CD4-positive, alpha-beta memory T cell (primary cell): ENCODE measurements at regions of chr15 and their contacts with region 1.

Region 1: GRCh38 chr15:44711356-44712107 is at the start of gene B2M:
- DNase-seq: peak; percentile 96 to 98 (median 97)
- H3K4me3 ChIP-seq: peak within 1 kb of the TSS; percentile 94
- H3K4me3 Mint-ChIP-seq: peak within 1 kb of the TSS; percentile 90 to 100 (median 99)
- H3K27ac ChIP-seq: peak within 1 kb of the TSS; percentile 99
- H3K27ac Mint-ChIP-seq: peak within 1 kb of the TSS; percentile 100
- H3K4me1 ChIP-seq: peaks cover 38% of the 10 kb centered on the region
- H3K4me1 Mint-ChIP-seq: peaks cover 33 to 75% (median 49%) of the 10 kb centered on the region in 4 donors
- H3K27me3 ChIP-seq: no peaks in the 10 kb centered on the region
- H3K27me3 Mint-ChIP-seq: no peaks in the 10 kb centered on the region
- total RNA-seq, gene B2M: 7,421 to 7,929 TPM

Region 2: DNA sequence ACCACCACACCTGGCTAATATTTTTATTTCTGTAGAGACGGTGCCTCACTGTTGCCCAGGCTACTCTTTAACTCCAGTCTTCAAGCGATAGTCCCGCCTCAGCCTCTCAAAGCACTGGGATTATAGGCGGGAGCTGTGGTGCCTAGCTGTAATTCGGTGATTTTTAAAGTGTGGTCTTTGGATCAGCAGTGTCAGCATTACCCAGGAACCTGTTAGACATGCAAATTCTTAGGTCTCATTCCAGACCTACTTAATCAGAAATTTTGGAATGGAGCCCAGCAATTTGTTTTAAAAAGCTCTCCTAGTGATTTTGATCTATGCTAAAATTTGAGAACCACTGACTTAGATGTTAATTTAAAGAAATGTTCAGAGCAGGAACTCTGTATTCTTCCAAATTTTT is 371.1 kb before region 1 on chr15:
- CTCF ChIA-PET with region 1: no interaction called
- POLR2A ChIA-PET with region 1: no interaction called
- intact Hi-C with region 1: no loop called
- DNase-seq: no peak
- H3K4me3 ChIP-seq: no peak overlapping the region
- H3K4me3 Mint-ChIP-seq: no peak overlapping the region
- H3K27ac ChIP-seq: no peak overlapping the region
- H3K27ac Mint-ChIP-seq: peak overlapping the region in 1 of 7 donors; percentile 36
- H3K4me1 ChIP-seq: no peaks in the 10 kb centered on the region
- H3K4me1 Mint-ChIP-seq: no peaks in the 10 kb centered on the region
- H3K27me3 ChIP-seq: no peaks in the 10 kb centered on the region
- H3K27me3 Mint-ChIP-seq: no peaks in the 10 kb centered on the region

Region 3: DNA sequence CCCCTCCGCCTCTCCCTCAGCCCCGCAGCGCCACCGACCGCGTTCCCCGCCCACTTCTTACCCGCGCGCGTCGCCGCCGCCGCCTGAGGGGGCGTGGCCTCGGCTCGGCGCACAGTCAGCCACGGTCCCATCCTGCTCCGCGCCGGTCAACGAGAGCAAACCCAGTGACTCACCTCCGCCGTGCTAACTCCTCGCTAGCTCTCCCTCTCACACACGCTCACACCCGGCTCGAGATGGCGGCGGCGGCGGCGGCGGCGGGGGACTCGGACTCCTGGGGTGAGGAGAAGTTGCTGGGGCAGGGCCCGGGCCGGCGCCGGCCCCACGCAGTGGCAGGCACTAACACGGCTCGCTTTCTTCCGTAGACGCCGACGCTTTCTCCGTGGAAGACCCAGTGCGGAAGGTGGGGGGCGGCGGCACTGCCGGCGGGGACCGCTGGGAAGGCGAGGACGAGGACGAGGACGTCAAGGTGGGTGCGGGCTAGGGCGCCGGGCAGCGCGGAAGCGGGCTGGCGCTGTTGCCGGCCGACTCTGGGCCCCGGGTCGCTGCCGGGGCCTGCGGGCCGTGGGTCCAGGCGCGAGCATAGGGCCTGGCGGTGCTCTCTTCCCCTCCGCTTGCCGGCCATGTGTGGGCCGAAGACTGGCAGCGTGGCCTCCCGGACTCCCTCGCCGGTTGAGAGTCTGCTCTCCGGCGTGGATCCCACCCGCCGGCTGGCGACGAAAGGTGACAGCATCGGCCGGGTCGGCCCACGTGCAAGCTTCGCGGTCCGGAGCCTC is 174.4 kb before region 1 on chr15 and contains the start of gene EIF3J:
- CTCF ChIA-PET with region 1: no interaction called
- POLR2A ChIA-PET with region 1: interaction called, 14 read pairs
- intact Hi-C with region 1: no loop called
- DNase-seq: peak; percentile 94 to 96 (median 96)
- H3K4me3 ChIP-seq: peak within 1 kb of the TSS; percentile 71 to 90
- H3K4me3 Mint-ChIP-seq: peak within 1 kb of the TSS; percentile 83 to 96 (median 92)
- H3K27ac ChIP-seq: peak within 1 kb of the TSS; percentile 91
- H3K27ac Mint-ChIP-seq: peak within 1 kb of the TSS; percentile 88 to 97 (median 96)
- H3K4me1 ChIP-seq: peaks cover 48% of the 10 kb centered on the region
- H3K4me1 Mint-ChIP-seq: peaks cover 36 to 68% (median 48%) of the 10 kb centered on the region in 4 donors
- H3K27me3 ChIP-seq: no peaks in the 10 kb centered on the region
- H3K27me3 Mint-ChIP-seq: no peaks in the 10 kb centered on the region
- total RNA-seq, gene EIF3J: 65.0 to 76.8 TPM

Region 4: DNA sequence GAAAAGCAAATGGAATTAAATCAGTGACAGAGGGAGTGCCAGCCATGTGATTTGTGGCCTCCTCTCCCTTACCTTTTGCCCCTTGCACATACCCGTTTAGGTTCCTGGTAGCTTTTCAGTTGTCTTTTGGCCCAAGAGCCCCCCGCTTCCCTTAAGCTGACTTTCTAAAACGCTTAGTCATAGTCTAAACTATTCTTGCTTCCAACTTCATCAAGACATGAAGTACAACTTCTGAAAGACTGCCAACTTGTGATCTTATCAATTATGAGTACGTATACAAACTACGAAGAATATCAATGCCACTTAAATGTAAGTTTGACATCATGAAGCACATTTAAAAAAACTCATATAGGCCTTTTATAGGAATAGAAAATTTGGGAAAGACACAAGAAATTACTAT is 112.6 kb before region 1 on chr15:
- CTCF ChIA-PET with region 1: interaction called, 3 read pairs
- POLR2A ChIA-PET with region 1: interaction called, 11 read pairs
- intact Hi-C with region 1: no loop called
- DNase-seq: no peak
- H3K4me3 ChIP-seq: no peak overlapping the region
- H3K4me3 Mint-ChIP-seq: no peak overlapping the region
- H3K27ac ChIP-seq: peak overlapping the region; percentile 8
- H3K27ac Mint-ChIP-seq: peak overlapping the region; percentile 2 to 93 (median 81)
- H3K4me1 ChIP-seq: peaks cover 20% of the 10 kb centered on the region
- H3K4me1 Mint-ChIP-seq: peaks cover 15 to 36% (median 20%) of the 10 kb centered on the region in 4 donors
- H3K27me3 ChIP-seq: no peaks in the 10 kb centered on the region
- H3K27me3 Mint-ChIP-seq: no peaks in the 10 kb centered on the region

Region 5: GRCh38 chr15:44670491-44670890 is 41.0 kb before region 1 on chr15:
- CTCF ChIA-PET with region 1: interaction called, 821 read pairs
- POLR2A ChIA-PET with region 1: interaction called, 5,737 read pairs
- intact Hi-C with region 1: no loop called
- DNase-seq: no peak
- H3K4me3 ChIP-seq: no peak overlapping the region
- H3K4me3 Mint-ChIP-seq: peak overlapping the region in 7 of 8 donors; percentile 15 to 80 (median 71)
- H3K27ac ChIP-seq: peak overlapping the region; percentile 40
- H3K27ac Mint-ChIP-seq: peak overlapping the region; percentile 89 to 96 (median 96)
- H3K4me1 ChIP-seq: peaks cover 98% of the 10 kb centered on the region
- H3K4me1 Mint-ChIP-seq: peaks cover 67 to 96% (median 89%) of the 10 kb centered on the region in 4 donors
- H3K27me3 ChIP-seq: no peaks in the 10 kb centered on the region
- H3K27me3 Mint-ChIP-seq: no peaks in the 10 kb centered on the region

Region 6: DNA sequence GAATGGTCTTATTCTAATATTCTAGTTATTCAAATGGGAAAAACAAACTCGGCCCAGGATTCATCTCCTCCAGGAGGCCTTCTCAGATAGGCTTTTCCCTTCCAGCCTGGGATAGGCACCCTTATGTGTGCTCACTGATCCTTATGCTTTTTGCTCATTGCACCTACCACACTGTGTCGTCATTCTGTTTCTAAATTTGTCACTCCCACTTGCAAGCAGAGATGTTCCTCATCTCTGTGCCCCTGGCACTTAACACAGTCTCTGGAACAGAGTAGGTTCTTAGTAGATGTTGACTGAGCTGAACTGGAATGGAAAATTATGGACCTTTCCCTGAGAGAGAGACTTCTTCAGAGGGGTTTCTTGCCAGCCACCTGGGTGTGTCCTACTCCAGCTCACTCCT is 29.3 kb before region 1 on chr15:
- CTCF ChIA-PET with region 1: interaction called, 167 read pairs
- POLR2A ChIA-PET with region 1: interaction called, 5,737 read pairs
- intact Hi-C with region 1: loop called (anchors 1 kb)
- DNase-seq: no peak
- H3K4me3 ChIP-seq: peak overlapping the region in 1 of 2 donors; percentile 13
- H3K4me3 Mint-ChIP-seq: peak overlapping the region in 7 of 8 donors; percentile 64 to 82 (median 75)
- H3K27ac ChIP-seq: peak overlapping the region; percentile 70
- H3K27ac Mint-ChIP-seq: peak overlapping the region; percentile 86 to 96 (median 93)
- H3K4me1 ChIP-seq: peaks cover 75% of the 10 kb centered on the region
- H3K4me1 Mint-ChIP-seq: peaks cover 66 to 99% (median 83%) of the 10 kb centered on the region in 4 donors
- H3K27me3 ChIP-seq: no peaks in the 10 kb centered on the region
- H3K27me3 Mint-ChIP-seq: no peaks in the 10 kb centered on the region

Region 7: GRCh38 chr15:44698641-44699040 is 12.9 kb before region 1 on chr15:
- CTCF ChIA-PET with region 1: interaction called, 34 read pairs
- POLR2A ChIA-PET with region 1: interaction called, 5,737 read pairs
- intact Hi-C with region 1: no loop called
- DNase-seq: no peak
- H3K4me3 ChIP-seq: no peak overlapping the region
- H3K4me3 Mint-ChIP-seq: no peak overlapping the region
- H3K27ac ChIP-seq: no peak overlapping the region
- H3K27ac Mint-ChIP-seq: peak overlapping the region in 1 of 7 donors; percentile 37
- H3K4me1 ChIP-seq: peaks cover 12% of the 10 kb centered on the region
- H3K4me1 Mint-ChIP-seq: peaks cover 17 to 47% (median 31%) of the 10 kb centered on the region in 4 donors
- H3K27me3 ChIP-seq: no peaks in the 10 kb centered on the region
- H3K27me3 Mint-ChIP-seq: no peaks in the 10 kb centered on the region

Region 8: GRCh38 chr15:44738340-44738984 is 26.9 kb after region 1 on chr15:
- CTCF ChIA-PET with region 1: interaction called, 601 read pairs
- POLR2A ChIA-PET with region 1: interaction called, 3,006 read pairs
- intact Hi-C with region 1: loop called (anchors 1 kb)
- DNase-seq: peak in 4 of 5 donors; percentile 59 to 65 (median 64)
- H3K4me3 ChIP-seq: no peak overlapping the region
- H3K4me3 Mint-ChIP-seq: peak overlapping the region in 5 of 8 donors; percentile 32 to 68 (median 43)
- H3K27ac ChIP-seq: peak overlapping the region; percentile 19
- H3K27ac Mint-ChIP-seq: peak overlapping the region; percentile 77 to 93 (median 87)
- H3K4me1 ChIP-seq: peaks cover 54% of the 10 kb centered on the region
- H3K4me1 Mint-ChIP-seq: peaks cover 35 to 55% (median 48%) of the 10 kb centered on the region in 4 donors
- H3K27me3 ChIP-seq: no peaks in the 10 kb centered on the region
- H3K27me3 Mint-ChIP-seq: no peaks in the 10 kb centered on the region

Region 9: DNA sequence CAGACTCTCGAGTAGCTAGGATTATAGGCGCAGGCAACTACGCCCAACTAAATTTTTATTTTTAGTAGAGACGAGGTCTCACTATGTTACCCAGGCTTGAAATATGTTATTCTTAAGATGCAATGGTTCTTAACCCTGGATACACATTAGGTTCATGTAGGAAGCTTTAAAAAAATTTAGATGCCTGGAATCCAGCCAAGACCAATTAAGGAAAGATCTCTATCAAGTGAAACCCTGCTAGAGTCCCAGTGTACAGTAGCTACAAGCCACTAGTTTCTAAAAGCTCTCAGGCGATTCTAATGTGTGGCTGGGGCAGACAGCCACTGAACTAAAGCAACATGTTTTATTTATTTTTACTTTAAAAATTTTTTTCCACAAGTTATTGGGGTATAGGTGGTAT is 58.0 kb after region 1 on chr15:
- CTCF ChIA-PET with region 1: no interaction called
- POLR2A ChIA-PET with region 1: no interaction called
- intact Hi-C with region 1: no loop called
- DNase-seq: no peak
- H3K4me3 ChIP-seq: no peak overlapping the region
- H3K4me3 Mint-ChIP-seq: no peak overlapping the region
- H3K27ac ChIP-seq: no peak overlapping the region
- H3K27ac Mint-ChIP-seq: no peak overlapping the region
- H3K4me1 ChIP-seq: no peaks in the 10 kb centered on the region
- H3K4me1 Mint-ChIP-seq: peaks cover 0 to 2% (median 0%) of the 10 kb centered on the region in 4 donors
- H3K27me3 ChIP-seq: no peaks in the 10 kb centered on the region
- H3K27me3 Mint-ChIP-seq: no peaks in the 10 kb centered on the region

Region 10: DNA sequence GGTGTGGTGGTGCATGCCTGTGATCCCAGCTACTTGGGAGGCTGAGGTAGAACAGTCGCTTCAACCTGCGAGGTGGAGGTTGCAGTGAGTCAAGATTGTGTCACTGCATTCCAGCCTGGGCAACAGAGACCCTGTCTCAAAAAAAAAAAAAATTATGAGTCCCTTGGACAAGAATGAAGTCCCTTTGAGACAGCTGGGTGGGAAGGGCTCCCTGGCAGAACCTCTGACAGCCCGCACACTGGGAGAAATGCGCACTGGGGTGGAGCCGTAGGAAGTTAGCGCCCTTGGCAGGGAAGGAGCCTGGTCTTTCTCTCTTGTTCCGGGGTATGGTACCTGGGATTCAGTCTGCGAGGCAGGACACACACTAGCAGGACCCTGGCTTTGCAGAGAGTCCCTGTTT is 759.6 kb after region 1 on chr15:
- CTCF ChIA-PET with region 1: no interaction called
- POLR2A ChIA-PET with region 1: no interaction called
- intact Hi-C with region 1: no loop called
- DNase-seq: no peak
- H3K4me3 ChIP-seq: no peak overlapping the region
- H3K4me3 Mint-ChIP-seq: no peak overlapping the region
- H3K27ac ChIP-seq: no peak overlapping the region
- H3K27ac Mint-ChIP-seq: no peak overlapping the region
- H3K4me1 ChIP-seq: no peaks in the 10 kb centered on the region
- H3K4me1 Mint-ChIP-seq: no peaks in the 10 kb centered on the region
- H3K27me3 ChIP-seq: no peaks in the 10 kb centered on the region
- H3K27me3 Mint-ChIP-seq: peaks cover 18 to 19% of the 10 kb centered on the region in 2 donors